ENCODE measurements at regions of chr4 and their contacts with region 1.

Region 1: GRCh38 chr4:54322818-54323417 is 93.8 kb downstream of the PDGFRA start:
- DNase-seq: peak; percentile 31
- H3K4me3 Mint-ChIP-seq: no peak overlapping the region
- H3K27ac Mint-ChIP-seq: no peak overlapping the region
- H3K4me1 Mint-ChIP-seq: peaks cover 13% of the 10 kb centered on the region
- H3K27me3 Mint-ChIP-seq: no peaks in the 10 kb centered on the region

Region 2: DNA sequence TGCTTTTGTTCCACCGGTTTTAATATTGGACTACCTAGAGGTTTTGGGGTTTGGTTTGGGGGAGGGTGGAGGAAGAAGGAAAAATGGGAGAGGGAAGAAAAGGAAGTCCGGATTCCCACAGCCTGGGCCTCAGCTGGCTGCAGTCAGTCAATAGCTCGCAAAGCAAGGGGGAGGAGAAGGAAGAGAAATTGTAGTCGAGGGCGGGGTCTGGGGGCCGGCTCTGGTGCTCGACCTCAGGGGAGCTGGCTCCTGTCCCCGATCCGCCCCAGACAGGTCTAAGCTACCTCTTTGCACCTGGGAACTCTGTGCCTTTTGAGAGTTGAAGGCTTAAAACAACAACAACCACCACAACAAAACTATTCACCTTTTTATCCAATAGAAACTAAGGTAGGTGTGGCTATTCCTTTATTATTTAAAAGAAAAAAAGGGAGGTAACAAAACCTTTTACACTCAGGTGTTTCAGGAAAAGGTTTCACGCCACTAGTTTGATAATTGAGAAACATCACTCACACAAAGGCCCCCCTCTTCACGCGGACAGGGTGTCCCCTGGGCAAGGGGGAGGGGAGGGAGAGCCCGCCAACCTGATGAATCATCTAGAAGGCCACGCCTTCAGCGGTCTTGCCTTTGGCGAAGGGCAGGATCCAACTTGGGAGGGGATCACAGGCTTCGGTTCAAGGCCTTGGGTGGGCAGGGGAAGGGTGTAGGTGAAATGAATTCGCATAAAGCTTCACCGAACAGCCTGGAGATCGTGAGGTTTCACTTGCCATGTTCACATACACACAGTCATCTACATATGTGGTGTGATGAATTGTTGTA is 730.0 kb before region 1 on chr4:
- intact Hi-C with region 1: no loop called
- DNase-seq: no peak
- H3K4me3 Mint-ChIP-seq: no peak overlapping the region
- H3K27ac Mint-ChIP-seq: no peak overlapping the region
- H3K4me1 Mint-ChIP-seq: peaks cover 4% of the 10 kb centered on the region
- H3K27me3 Mint-ChIP-seq: peaks cover 23% of the 10 kb centered on the region

Region 3: DNA sequence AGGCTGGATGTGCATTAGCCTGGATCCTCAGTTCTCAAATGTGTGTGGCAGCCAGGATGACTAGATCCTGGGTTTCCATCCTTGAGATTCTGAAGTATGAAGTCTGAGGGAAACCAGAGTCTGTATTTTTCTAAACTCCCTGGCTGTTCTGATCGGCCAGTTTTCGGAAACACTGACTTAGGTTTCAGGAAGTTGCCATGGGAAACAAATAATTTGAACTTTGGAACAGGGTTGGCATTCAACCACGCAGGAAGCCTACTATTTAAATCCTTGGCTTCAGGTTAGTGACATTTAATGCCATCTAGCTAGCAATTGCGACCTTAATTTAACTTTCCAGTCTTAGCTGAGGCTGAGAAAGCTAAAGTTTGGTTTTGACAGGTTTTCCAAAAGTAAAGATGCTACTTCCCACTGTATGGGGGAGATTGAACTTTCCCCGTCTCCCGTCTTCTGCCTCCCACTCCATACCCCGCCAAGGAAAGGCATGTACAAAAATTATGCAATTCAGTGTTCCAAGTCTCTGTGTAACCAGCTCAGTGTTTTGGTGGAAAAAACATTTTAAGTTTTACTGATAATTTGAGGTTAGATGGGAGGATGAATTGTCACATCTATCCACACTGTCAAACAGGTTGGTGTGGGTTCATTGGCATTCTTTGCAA is 26.2 kb before region 1 on chr4:
- intact Hi-C with region 1: no loop called
- DNase-seq: no peak
- H3K4me3 Mint-ChIP-seq: no peak overlapping the region
- H3K27ac Mint-ChIP-seq: no peak overlapping the region
- H3K4me1 Mint-ChIP-seq: no peaks in the 10 kb centered on the region
- H3K27me3 Mint-ChIP-seq: no peaks in the 10 kb centered on the region

Region 4: GRCh38 chr4:54440394-54441136 is 117.6 kb after region 1 on chr4:
- intact Hi-C with region 1: loop called (anchors 5 kb)
- DNase-seq: no peak
- H3K4me3 Mint-ChIP-seq: no peak overlapping the region
- H3K27ac Mint-ChIP-seq: no peak overlapping the region
- H3K4me1 Mint-ChIP-seq: no peaks in the 10 kb centered on the region
- H3K27me3 Mint-ChIP-seq: peaks cover 13% of the 10 kb centered on the region

Region 5: DNA sequence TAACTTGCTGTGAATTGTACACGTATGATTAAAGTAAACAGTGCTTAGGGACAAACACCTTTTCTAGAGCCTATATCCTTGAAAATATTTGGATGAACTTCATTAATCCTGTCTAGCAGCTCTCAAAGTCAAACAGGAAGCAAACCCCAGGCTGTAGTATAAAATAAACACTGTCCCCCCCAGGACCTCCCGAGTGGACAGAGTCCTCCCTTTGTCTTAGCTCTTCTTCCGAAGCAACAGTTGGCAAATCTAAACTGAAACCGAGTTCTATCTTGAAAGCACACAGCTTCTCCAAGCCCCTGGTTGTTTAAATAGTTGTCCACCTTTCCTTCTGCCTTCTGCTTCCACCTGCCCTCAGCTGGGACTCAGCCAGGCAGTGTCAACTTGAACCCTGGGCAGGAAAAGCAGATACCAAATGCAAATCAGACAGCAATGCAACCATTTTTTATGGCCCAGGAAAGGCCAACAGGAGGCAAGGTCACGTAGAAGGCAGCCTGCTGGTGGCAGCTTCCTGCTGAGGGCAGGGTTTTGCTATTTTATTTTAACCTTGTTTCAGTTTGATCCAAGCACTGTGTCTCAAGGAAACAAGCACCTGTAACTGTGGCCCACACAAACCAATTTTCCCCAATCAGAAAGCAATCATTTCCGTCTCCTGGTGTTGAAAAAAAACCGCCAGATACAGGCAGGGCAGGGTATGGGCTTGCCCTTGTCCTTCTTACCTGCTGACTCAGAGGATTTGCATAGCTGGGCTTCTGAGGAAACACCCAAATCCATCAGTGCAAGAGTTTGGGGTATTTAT is 224.6 kb after region 1 on chr4:
- intact Hi-C with region 1: loop called (anchors 5 kb)
- DNase-seq: peak; percentile 23
- H3K4me3 Mint-ChIP-seq: no peak overlapping the region
- H3K27ac Mint-ChIP-seq: peak overlapping the region; percentile 91
- H3K4me1 Mint-ChIP-seq: peaks cover 13% of the 10 kb centered on the region
- H3K27me3 Mint-ChIP-seq: no peaks in the 10 kb centered on the region

Region 6: DNA sequence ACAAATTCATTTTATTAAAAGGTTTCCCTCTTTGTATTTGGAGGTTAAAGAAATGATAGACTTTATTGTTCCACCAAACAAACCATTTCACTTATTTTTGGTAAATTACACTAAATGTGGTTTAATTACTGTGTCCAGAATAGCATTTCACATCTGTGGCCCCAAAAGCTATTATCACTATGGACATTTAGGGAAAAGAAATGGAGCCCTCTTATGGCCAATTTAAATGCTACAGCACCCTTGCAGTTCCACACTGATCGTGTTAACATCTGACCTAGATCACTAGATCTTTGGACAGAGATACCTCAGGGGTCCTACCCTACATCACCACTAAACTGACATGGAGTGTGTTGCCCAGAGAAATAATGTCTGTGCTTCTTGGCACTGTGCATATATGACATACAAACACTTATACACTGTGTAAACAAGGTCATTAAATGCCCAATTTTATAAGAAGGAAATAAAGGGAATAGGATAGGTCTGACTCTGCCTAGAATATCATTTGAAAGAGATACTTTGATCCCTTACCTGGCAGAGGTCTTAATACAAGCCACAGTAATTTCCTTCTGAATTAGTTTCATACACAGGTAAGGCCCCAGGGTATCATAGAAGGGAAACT is 638.5 kb after region 1 on chr4:
- intact Hi-C with region 1: loop called (anchors 10 kb)
- DNase-seq: no peak
- H3K4me3 Mint-ChIP-seq: no peak overlapping the region
- H3K27ac Mint-ChIP-seq: no peak overlapping the region
- H3K4me1 Mint-ChIP-seq: peaks cover 3% of the 10 kb centered on the region
- H3K27me3 Mint-ChIP-seq: peaks cover 2% of the 10 kb centered on the region